ENCODE measurements at regions of chr4 and their contacts with region 1.

Region 1: DNA sequence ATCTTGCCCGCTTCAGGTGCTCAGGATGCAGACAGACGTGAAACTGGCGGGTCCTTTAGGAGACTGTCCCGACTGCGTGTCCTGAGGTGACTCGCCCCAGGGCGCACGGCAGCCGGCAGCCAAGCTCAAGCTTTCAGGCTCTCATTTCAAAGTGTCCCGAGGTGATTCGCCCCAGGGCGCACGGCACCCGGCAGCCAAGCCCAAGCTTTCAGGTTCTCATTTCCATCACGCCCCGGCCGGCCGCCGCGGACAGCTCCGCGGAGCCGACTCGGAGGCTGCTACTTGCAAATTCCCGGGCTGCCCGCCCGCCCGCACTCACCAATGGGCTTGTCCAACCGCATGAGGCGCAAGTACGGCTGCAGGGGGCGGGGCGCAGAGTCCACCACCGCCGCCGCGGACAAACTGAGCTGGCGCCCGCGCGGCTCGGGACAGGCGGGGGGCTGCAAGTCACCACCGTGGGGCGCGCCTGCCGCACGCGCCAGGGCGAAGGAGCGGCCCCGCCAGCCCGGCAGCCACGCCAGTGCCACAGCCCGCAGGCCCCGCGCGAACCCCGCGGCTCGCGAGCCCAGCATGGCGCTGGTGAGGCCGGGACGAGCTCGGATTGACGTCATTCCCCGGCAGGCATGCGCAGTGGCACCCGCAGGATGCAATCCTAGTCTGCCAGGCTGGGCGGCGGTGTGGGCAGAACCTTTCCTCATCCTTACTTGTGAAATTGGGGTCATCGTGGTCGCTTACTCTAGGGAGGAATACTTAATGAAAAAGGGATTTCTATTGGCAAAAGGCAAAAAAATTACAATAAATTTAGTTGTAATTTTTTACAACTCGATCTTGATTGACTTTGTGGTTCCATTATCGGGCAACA is at the start of gene COQ2:
- DNase-seq: peak; percentile 86
- ATAC-seq: peak; percentile 96
- H3K4me3 ChIP-seq: peak within 1 kb of the TSS; percentile 63 to 78 (median 73)
- H3K27ac ChIP-seq: peak within 1 kb of the TSS; percentile 87
- H3K4me1 ChIP-seq: peaks cover 41% of the 10 kb centered on the region
- H3K27me3 ChIP-seq: no peaks in the 10 kb centered on the region
- CTCF ChIP-seq: peak; percentile 48
- EP300 ChIP-seq: 0 out of 4 replicates have a peak, but pooled peaks of 1 of the 2 experiments have one; percentile 4
- POLR2A ChIP-seq: peak; percentile 83
- RAD21 ChIP-seq: peak; percentile 71
- total RNA-seq, gene COQ2: 16.4 and 17.3 TPM in 2 replicates

Region 2: DNA sequence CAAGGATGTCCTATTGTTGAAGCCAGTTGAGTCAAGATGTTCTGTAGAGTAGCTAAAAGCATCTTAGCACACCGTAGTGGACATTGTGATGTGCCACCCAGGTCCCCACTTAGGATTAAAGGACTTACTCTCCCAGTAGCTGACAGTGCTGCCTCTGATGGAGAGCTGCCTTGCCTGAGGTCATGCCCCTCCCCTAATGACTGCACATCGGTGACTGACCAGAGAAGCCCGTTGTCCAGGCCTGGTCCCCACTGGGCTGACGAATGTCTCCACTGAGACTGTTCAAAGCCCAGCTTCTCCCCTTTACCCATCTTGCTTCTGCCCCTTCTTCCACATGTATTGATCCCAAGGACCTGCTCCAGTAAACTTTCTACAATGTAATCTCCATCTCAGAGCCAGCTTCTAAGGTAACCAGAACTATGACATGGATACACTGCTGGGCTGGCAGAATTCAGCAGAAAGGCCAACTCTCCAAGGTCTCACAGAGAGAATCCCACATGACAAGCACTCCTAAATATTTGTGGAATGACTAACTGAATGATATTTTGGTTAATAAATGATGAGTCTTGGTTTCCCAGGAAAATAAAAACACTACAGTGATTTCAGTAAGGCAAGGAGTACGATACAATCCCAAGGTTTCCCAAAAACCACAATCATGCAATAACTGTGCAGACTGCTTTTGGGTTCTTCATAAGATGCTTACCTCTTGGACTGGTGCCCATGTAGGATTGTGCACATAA is 640.3 kb before region 1 on chr4:
- CTCF ChIA-PET with region 1: no interaction called
- POLR2A ChIA-PET with region 1: no interaction called
- in situ Hi-C with region 1: no loop called
- intact Hi-C with region 1: no loop called
- DNase-seq: no peak
- ATAC-seq: no peak
- H3K4me3 ChIP-seq: no peak overlapping the region
- H3K27ac ChIP-seq: no peak overlapping the region
- H3K4me1 ChIP-seq: peaks cover 8% of the 10 kb centered on the region; the same call in 1 of the 2 replicates
- H3K27me3 ChIP-seq: peaks cover 0 to 2% of the 10 kb centered on the region in 2 experiments; a peak in 2 of 5 replicates
- CTCF ChIP-seq: no peak
- EP300 ChIP-seq: no peak
- POLR2A ChIP-seq: no peak
- RAD21 ChIP-seq: no peak

Region 3: GRCh38 chr4:82890901-82891706 is 393.3 kb before region 1 on chr4 and contains the start of gene SEC31A:
- CTCF ChIA-PET with region 1: no interaction called
- POLR2A ChIA-PET with region 1: no interaction called
- in situ Hi-C with region 1: no loop called
- intact Hi-C with region 1: loop called (anchors 10 kb)
- DNase-seq: peak; percentile 91
- ATAC-seq: peak; percentile 91
- H3K4me3 ChIP-seq: peak within 1 kb of the TSS; percentile 81 to 99 (median 91)
- H3K27ac ChIP-seq: peak within 1 kb of the TSS; percentile 98
- H3K4me1 ChIP-seq: peaks cover 41% of the 10 kb centered on the region
- H3K27me3 ChIP-seq: no peaks in the 10 kb centered on the region; a peak in 2 of 5 replicates
- CTCF ChIP-seq: peak; percentile 71
- EP300 ChIP-seq: peak in 1 of 2 experiments; percentile 59; a peak in 3 of 4 replicates
- POLR2A ChIP-seq: peak; percentile 94 to 97
- RAD21 ChIP-seq: peak; percentile 15; the same call in 1 of the 2 replicates
- total RNA-seq, gene SEC31A: 231 and 351 TPM in 2 replicates

Region 4: GRCh38 chr4:83074086-83074704 is 210.2 kb before region 1 on chr4:
- CTCF ChIA-PET with region 1: interaction called, 12 read pairs
- POLR2A ChIA-PET with region 1: no interaction called
- in situ Hi-C with region 1: no loop called
- intact Hi-C with region 1: loop called (anchors 1 kb)
- DNase-seq: peak; percentile 75
- ATAC-seq: peak; percentile 78
- H3K4me3 ChIP-seq: no peak overlapping the region
- H3K27ac ChIP-seq: no peak overlapping the region
- H3K4me1 ChIP-seq: no peaks in the 10 kb centered on the region
- H3K27me3 ChIP-seq: no peaks in the 10 kb centered on the region
- CTCF ChIP-seq: peak; percentile 70
- EP300 ChIP-seq: no peak
- POLR2A ChIP-seq: no peak
- RAD21 ChIP-seq: peak; percentile 59; the same call in 1 of the 2 replicates

Region 5: GRCh38 chr4:83114576-83114975 is 169.8 kb before region 1 on chr4 and contains the start of gene PLAC8:
- CTCF ChIA-PET with region 1: no interaction called
- POLR2A ChIA-PET with region 1: interaction called, 3 read pairs
- in situ Hi-C with region 1: no loop called
- intact Hi-C with region 1: loop called (anchors 1 kb)
- DNase-seq: peak; percentile 69
- ATAC-seq: peak; percentile 76
- H3K4me3 ChIP-seq: peak within 1 kb of the TSS; percentile 62 to 83 (median 72)
- H3K27ac ChIP-seq: peak within 1 kb of the TSS; percentile 78
- H3K4me1 ChIP-seq: peaks cover 61% of the 10 kb centered on the region
- H3K27me3 ChIP-seq: no peaks in the 10 kb centered on the region
- CTCF ChIP-seq: no peak
- EP300 ChIP-seq: no peak
- POLR2A ChIP-seq: peak; percentile 48 to 68
- RAD21 ChIP-seq: no peak
- total RNA-seq, gene PLAC8: 3.0 and 4.1 TPM in 2 replicates

Region 6: DNA sequence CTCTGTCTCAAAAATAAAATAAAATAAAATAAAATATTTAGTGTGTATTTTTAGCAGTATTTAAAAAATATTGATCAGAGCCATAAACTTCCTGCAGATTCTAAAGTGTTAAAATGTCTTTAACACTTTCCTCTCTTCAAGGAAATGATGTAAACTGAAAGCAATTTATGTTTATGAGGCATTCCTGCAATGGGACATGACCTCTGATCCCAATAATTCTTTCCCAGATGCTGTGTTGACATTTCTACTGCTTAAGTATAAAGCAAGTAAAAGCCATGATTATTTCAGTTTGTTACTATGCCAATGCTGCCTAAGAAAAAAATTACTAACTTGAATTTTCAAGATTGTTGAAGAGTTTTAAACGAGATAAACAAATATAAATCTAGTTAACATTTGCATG is 28.8 kb before region 1 on chr4:
- CTCF ChIA-PET with region 1: no interaction called
- POLR2A ChIA-PET with region 1: no interaction called
- in situ Hi-C with region 1: no loop called
- intact Hi-C with region 1: no loop called
- DNase-seq: no peak
- ATAC-seq: no peak
- H3K4me3 ChIP-seq: no peak overlapping the region
- H3K27ac ChIP-seq: no peak overlapping the region
- H3K4me1 ChIP-seq: 0 out of 2 replicates have a peak, but pooled peaks cover 4% of the 10 kb centered on the region
- H3K27me3 ChIP-seq: no peaks in the 10 kb centered on the region
- CTCF ChIP-seq: no peak
- EP300 ChIP-seq: no peak
- POLR2A ChIP-seq: no peak
- RAD21 ChIP-seq: no peak

Region 7: DNA sequence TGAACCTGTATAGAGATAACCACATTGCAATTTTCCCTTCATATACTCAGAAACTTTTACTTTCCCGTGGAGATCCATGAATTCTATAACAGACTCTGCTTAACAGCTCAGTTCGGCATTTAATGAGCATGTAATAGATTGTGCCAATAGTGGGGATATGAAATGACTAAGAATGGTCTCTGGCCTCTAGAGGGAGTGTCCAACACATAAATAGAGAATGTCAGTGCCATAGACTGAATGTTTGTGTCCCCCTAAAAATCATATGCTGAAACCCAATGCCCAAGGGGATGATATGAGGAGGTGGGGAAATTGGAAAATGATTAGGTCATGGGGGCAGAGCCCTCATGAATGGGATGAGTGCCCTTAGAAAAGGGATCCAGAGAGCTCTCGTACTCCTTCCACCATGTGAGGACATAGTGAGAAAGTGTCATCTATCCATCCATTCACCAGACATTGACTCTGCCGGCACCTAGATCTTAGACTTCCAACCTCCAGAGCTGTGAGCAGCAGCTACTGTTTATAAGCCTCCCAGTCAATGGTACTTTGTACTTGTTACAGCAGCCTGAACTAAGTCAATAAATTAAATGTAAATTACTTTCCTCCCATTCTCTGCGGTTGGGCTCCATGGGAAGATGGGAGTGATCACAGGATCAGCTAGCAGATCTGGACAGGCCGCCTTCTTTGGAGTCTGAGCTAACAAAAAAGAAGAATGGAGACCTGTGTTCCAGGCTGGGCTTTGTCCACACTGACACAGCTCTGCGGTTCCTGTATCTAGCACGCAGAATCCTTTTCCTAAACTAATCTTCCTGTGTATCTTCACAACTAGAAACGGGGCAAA is 78.3 kb after region 1 on chr4:
- CTCF ChIA-PET with region 1: no interaction called
- POLR2A ChIA-PET with region 1: interaction called, 12 read pairs
- in situ Hi-C with region 1: no loop called
- intact Hi-C with region 1: loop called (anchors 2 kb)
- DNase-seq: peak; percentile 96
- ATAC-seq: peak; percentile 89
- H3K4me3 ChIP-seq: peak overlapping the region; percentile 27 to 53 (median 33); a peak in 5 of 6 replicates
- H3K27ac ChIP-seq: peak overlapping the region; percentile 85
- H3K4me1 ChIP-seq: peaks cover 54% of the 10 kb centered on the region
- H3K27me3 ChIP-seq: no peaks in the 10 kb centered on the region
- CTCF ChIP-seq: peak; percentile 69
- EP300 ChIP-seq: peak in 1 of 2 experiments; percentile 73; a peak in 2 of 4 replicates
- POLR2A ChIP-seq: peak in 1 of 2 experiments; percentile 75; a peak in 2 of 4 replicates
- RAD21 ChIP-seq: peak; percentile 15; the same call in 1 of the 2 replicates

Region 8: GRCh38 chr4:83455281-83456129 is 171.1 kb after region 1 on chr4 and contains the starts of genes HELQ and MRPS18C:
- CTCF ChIA-PET with region 1: no interaction called
- POLR2A ChIA-PET with region 1: interaction called, 3 read pairs
- in situ Hi-C with region 1: no loop called
- intact Hi-C with region 1: loop called (anchors 10 kb)
- DNase-seq: peak; percentile 99
- ATAC-seq: peak; percentile 95
- H3K4me3 ChIP-seq: peak within 1 kb of the TSS; percentile 78 to 98 (median 90)
- H3K27ac ChIP-seq: peak within 1 kb of the TSS; percentile 93
- H3K4me1 ChIP-seq: peaks cover 29% of the 10 kb centered on the region
- H3K27me3 ChIP-seq: no peaks in the 10 kb centered on the region; a peak in 1 of 5 replicates
- CTCF ChIP-seq: peak; percentile 29
- EP300 ChIP-seq: peak in 1 of 2 experiments; percentile 72; a peak in 3 of 4 replicates
- POLR2A ChIP-seq: peak; percentile 91 to 97
- RAD21 ChIP-seq: no peak; the same call in 1 of the 2 replicates
- total RNA-seq, gene HELQ: 10.2 and 10.8 TPM in 2 replicates
- total RNA-seq, gene MRPS18C: 124 and 141 TPM in 2 replicates

Region 9: GRCh38 chr4:83484500-83485461 is 200.4 kb after region 1 on chr4 and contains the start of gene ABRAXAS1:
- CTCF ChIA-PET with region 1: no interaction called
- POLR2A ChIA-PET with region 1: no interaction called
- in situ Hi-C with region 1: no loop called
- intact Hi-C with region 1: loop called (anchors 2 kb)
- DNase-seq: peak; percentile 91
- ATAC-seq: peak; percentile 93
- H3K4me3 ChIP-seq: peak within 1 kb of the TSS; percentile 62 to 78 (median 72)
- H3K27ac ChIP-seq: peak within 1 kb of the TSS; percentile 74
- H3K4me1 ChIP-seq: peaks cover 37% of the 10 kb centered on the region
- H3K27me3 ChIP-seq: no peaks in the 10 kb centered on the region
- CTCF ChIP-seq: no peak
- EP300 ChIP-seq: no peak
- POLR2A ChIP-seq: peak; percentile 84 to 94
- RAD21 ChIP-seq: 0 out of 2 replicates have a peak, but pooled peaks have one; percentile 22
- total RNA-seq, gene ABRAXAS1: 14.1 and 20.8 TPM in 2 replicates

Measured in HepG2 (cell line).